ENCODE measurements at regions of chr12 and their contacts with region 1.

Region 1: DNA sequence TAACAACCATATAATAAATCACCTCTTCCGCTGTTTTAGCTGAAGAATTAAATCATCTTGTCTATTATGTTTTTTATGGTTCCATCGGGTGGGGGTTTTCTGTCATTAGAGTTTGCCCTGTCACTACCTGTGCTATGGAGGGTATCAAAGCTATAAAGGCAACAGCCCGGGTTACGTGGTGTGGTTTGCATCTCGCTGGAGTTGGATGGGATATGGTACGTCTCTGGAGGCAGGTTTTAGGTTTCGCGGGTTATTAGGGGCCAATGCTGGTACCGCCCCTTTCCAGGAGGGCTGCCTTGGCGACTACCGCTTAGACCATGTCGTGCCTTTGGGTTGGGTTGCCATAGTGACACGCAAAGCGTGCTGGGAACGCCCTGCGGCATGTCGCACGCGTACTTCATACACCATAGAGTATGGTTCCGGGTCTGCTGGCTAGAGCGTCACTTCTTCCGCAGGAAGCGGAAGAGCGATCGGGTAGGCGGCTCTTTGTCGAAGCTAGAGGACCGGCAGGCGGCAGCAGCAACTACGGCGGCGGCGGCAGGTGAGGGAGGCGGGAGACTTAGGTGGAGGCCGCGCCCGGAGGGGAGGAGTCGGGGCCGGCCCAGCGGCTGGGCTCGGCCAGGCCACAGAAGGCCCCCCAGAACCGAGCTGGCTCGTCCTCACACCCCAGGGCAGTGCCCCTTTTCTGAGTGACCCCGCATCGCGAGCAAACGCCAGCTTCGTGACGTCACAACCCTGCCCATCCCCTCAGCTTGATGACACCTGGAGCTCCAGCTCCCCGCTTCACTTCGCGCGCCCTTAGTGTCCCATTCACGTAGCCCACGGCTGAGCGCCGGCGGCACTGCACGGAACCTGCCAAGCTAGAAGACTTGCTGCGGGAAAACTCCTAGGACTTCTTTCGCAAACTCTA is at the start of gene ZC3H10:
- DNase-seq: peak; percentile 91 to 100 (median 96)
- ATAC-seq: peak; percentile 70
- H3K4me3 ChIP-seq: peak within 1 kb of the TSS; percentile 77 to 86
- H3K4me3 Mint-ChIP-seq: peak within 1 kb of the TSS; percentile 98
- H3K27ac ChIP-seq: peak within 1 kb of the TSS; percentile 87 to 95
- H3K27ac Mint-ChIP-seq: peak within 1 kb of the TSS; percentile 99
- H3K4me1 ChIP-seq: peaks cover 30% of the 10 kb centered on the region
- H3K4me1 Mint-ChIP-seq: peaks cover 38% of the 10 kb centered on the region
- H3K27me3 ChIP-seq: no peaks in the 10 kb centered on the region
- H3K27me3 Mint-ChIP-seq: no peaks in the 10 kb centered on the region
- CTCF ChIP-seq: peak; percentile 33
- total RNA-seq, gene ZC3H10: 9.0 TPM

Region 2: DNA sequence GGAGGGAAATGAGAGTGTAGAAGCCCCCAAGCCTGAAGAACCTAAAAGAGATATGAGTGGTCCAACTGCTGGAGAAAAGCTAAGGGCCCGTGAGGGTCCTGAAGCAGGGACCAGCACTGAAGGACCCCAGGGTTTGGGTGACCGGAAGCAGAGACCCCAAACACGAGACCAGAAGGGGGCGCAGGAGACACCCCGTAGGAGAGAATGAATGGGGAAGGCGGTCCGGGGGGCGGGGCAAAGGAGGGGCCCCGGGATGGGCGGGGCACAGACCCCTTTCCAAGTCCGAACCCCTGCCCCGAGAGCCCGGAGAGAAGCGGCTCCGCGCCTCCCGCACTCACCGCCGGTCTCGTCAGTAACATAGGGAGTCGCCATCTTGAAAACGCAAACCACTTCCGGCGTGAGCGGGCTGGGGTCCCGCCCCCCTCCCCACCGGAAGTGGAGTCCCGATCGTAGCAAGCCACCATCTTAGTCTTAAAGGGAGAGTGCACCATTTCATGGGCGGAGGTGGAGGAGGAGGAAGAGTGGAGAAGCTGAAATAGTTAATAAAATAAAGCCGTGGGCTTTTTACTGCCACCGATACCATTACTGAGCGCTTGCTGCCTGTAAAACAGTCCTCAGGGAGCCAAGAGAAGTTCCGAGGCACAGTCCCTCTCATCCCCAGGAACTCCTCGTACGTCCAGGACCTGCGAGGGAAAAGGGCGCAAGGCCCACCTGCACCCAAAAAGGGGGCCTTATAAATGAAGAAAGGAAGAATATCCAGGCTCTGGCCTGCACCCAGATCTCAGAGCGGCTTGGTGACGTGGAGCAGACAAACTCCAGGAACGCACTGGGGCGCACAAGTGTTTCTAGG is 191.1 kb before region 1 on chr12:
- CTCF ChIA-PET with region 1: no interaction called
- POLR2A ChIA-PET with region 1: no interaction called
- intact Hi-C with region 1: loop called (anchors 1 kb)
- DNase-seq: peak; percentile 75 to 96 (median 88)
- ATAC-seq: peak; percentile 35
- H3K4me3 ChIP-seq: peak overlapping the region; percentile 90 to 98
- H3K4me3 Mint-ChIP-seq: peak overlapping the region; percentile 99
- H3K27ac ChIP-seq: peak overlapping the region; percentile 65 to 80
- H3K27ac Mint-ChIP-seq: peak overlapping the region; percentile 95
- H3K4me1 ChIP-seq: peaks cover 40% of the 10 kb centered on the region
- H3K4me1 Mint-ChIP-seq: peaks cover 51% of the 10 kb centered on the region
- H3K27me3 ChIP-seq: no peaks in the 10 kb centered on the region
- H3K27me3 Mint-ChIP-seq: no peaks in the 10 kb centered on the region
- CTCF ChIP-seq: peak; percentile 70

Region 3: GRCh38 chr12:56007564-56008559 is 110.2 kb before region 1 on chr12:
- CTCF ChIA-PET with region 1: no interaction called
- POLR2A ChIA-PET with region 1: no interaction called
- intact Hi-C with region 1: no loop called
- DNase-seq: peak; percentile 24 to 80 (median 72)
- ATAC-seq: peak; percentile 94
- H3K4me3 ChIP-seq: peak overlapping the region; percentile 53 to 60
- H3K4me3 Mint-ChIP-seq: peak overlapping the region; percentile 80
- H3K27ac ChIP-seq: peak overlapping the region; percentile 35 to 56
- H3K27ac Mint-ChIP-seq: peak overlapping the region; percentile 85
- H3K4me1 ChIP-seq: peaks cover 15% of the 10 kb centered on the region
- H3K4me1 Mint-ChIP-seq: peaks cover 23% of the 10 kb centered on the region
- H3K27me3 ChIP-seq: no peaks in the 10 kb centered on the region
- H3K27me3 Mint-ChIP-seq: no peaks in the 10 kb centered on the region
- CTCF ChIP-seq: no peak

Region 4: GRCh38 chr12:56078990-56079664 is 38.9 kb before region 1 on chr12:
- CTCF ChIA-PET with region 1: interaction called, 7 read pairs
- POLR2A ChIA-PET with region 1: interaction called, 10 read pairs
- intact Hi-C with region 1: loop called (anchors 1 to 5 kb)
- DNase-seq: peak; percentile 10 to 74 (median 52)
- ATAC-seq: peak; percentile 64
- H3K4me3 ChIP-seq: peak overlapping the region; percentile 60 to 72
- H3K4me3 Mint-ChIP-seq: peak overlapping the region; percentile 85
- H3K27ac ChIP-seq: no peak overlapping the region
- H3K27ac Mint-ChIP-seq: no peak overlapping the region
- H3K4me1 ChIP-seq: peaks cover 18% of the 10 kb centered on the region
- H3K4me1 Mint-ChIP-seq: peaks cover 14% of the 10 kb centered on the region
- H3K27me3 ChIP-seq: peaks cover 3 to 12% of the 10 kb centered on the region in 2 experiments
- H3K27me3 Mint-ChIP-seq: peaks cover 2% of the 10 kb centered on the region
- CTCF ChIP-seq: peak; percentile 56

Region 5: GRCh38 chr12:56158029-56158925 is 40.2 kb after region 1 on chr12 and contains the start of gene MYL6:
- CTCF ChIA-PET with region 1: interaction called, 12 read pairs
- POLR2A ChIA-PET with region 1: interaction called, 11 read pairs
- intact Hi-C with region 1: loop called in 1 of 2 experiments (anchors 5 kb)
- DNase-seq: peak; percentile 72 to 98 (median 90)
- ATAC-seq: peak; percentile 79
- H3K4me3 ChIP-seq: peak within 1 kb of the TSS; percentile 70 to 83
- H3K4me3 Mint-ChIP-seq: peak within 1 kb of the TSS; percentile 98
- H3K27ac ChIP-seq: peak within 1 kb of the TSS; percentile 86 to 94
- H3K27ac Mint-ChIP-seq: peak within 1 kb of the TSS; percentile 99
- H3K4me1 ChIP-seq: peaks cover 32% of the 10 kb centered on the region
- H3K4me1 Mint-ChIP-seq: peaks cover 42% of the 10 kb centered on the region
- H3K27me3 ChIP-seq: no peaks in the 10 kb centered on the region
- H3K27me3 Mint-ChIP-seq: no peaks in the 10 kb centered on the region
- CTCF ChIP-seq: no peak
- total RNA-seq, gene MYL6: 580 to 582 TPM

Region 6: DNA sequence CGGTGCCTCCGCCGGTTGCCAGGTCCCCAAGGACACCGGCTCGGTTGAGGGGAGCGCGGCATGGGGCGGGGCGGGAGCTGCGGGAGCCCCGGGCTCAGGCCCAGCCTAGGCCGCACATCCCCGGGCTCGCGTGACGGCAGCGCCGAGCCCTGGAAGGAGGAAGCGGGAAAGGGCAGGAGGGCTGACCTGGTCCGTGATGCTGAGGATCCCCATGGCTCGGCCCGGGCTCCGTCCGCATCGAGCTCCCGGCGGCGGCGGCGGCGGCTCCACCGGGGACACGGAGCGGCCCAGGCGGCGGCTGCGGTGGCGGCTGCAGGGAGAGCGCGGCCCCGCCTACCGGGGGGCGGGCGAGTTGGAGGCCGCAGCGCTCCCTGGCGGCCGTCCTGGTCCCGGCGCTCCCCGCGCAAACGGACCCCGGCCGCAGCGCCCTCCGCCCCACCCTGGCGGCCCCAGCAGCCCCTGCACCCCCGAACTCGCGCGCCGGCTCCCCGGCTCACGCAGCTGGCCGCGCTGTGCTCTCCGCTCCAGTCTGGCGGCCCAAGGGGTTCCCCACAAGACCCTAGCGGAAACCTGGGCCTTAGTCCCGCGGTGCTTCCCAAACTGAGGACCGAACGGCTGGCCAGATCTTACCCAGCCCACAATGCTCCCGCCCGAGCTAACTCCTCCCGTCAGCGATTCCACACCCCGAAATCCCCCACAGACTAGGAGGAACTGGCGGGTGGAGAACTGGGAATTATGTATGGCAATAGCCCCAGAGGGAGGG is 140.2 kb after region 1 on chr12 and contains the start of gene ANKRD52:
- CTCF ChIA-PET with region 1: interaction called, 27 read pairs
- POLR2A ChIA-PET with region 1: interaction called, 11 read pairs
- intact Hi-C with region 1: loop called (anchors 1 kb)
- DNase-seq: peak; percentile 61 to 92 (median 77)
- ATAC-seq: peak; percentile 95
- H3K4me3 ChIP-seq: peak within 1 kb of the TSS; percentile 79 to 99
- H3K4me3 Mint-ChIP-seq: peak within 1 kb of the TSS; percentile 94
- H3K27ac ChIP-seq: peak within 1 kb of the TSS; percentile 77
- H3K27ac Mint-ChIP-seq: peak within 1 kb of the TSS; percentile 88
- H3K4me1 ChIP-seq: peaks cover 21% of the 10 kb centered on the region
- H3K4me1 Mint-ChIP-seq: peaks cover 21% of the 10 kb centered on the region
- H3K27me3 ChIP-seq: no peaks in the 10 kb centered on the region
- H3K27me3 Mint-ChIP-seq: no peaks in the 10 kb centered on the region
- CTCF ChIP-seq: peak; percentile 64
- total RNA-seq, gene ANKRD52: 27.7 to 29.9 TPM

Region 7: GRCh38 chr12:56359851-56360767 is 242.1 kb after region 1 on chr12 and contains the start of gene STAT2:
- CTCF ChIA-PET with region 1: no interaction called
- POLR2A ChIA-PET with region 1: interaction called, 6 read pairs
- intact Hi-C with region 1: loop called in 1 of 2 experiments (anchors 1 kb)
- DNase-seq: peak; percentile 98 to 100 (median 99)
- ATAC-seq: peak; percentile 93
- H3K4me3 ChIP-seq: peak within 1 kb of the TSS; percentile 78 to 81
- H3K4me3 Mint-ChIP-seq: peak within 1 kb of the TSS; percentile 95
- H3K27ac ChIP-seq: peak within 1 kb of the TSS; percentile 76 to 78
- H3K27ac Mint-ChIP-seq: peak within 1 kb of the TSS; percentile 95
- H3K4me1 ChIP-seq: peaks cover 23% of the 10 kb centered on the region
- H3K4me1 Mint-ChIP-seq: peaks cover 34% of the 10 kb centered on the region
- H3K27me3 ChIP-seq: no peaks in the 10 kb centered on the region
- H3K27me3 Mint-ChIP-seq: no peaks in the 10 kb centered on the region
- CTCF ChIP-seq: no peak
- total RNA-seq, gene STAT2: 71.8 to 81.9 TPM

Region 8: GRCh38 chr12:56724972-56725722 is 607.1 kb after region 1 on chr12 and contains the start of gene NACA:
- CTCF ChIA-PET with region 1: no interaction called
- POLR2A ChIA-PET with region 1: no interaction called
- intact Hi-C with region 1: loop called in 1 of 2 experiments (anchors 5 kb)
- DNase-seq: peak; percentile 94 to 99 (median 97)
- ATAC-seq: peak; percentile 95
- H3K4me3 ChIP-seq: peak within 1 kb of the TSS; percentile 70 to 88
- H3K4me3 Mint-ChIP-seq: peak within 1 kb of the TSS; percentile 99
- H3K27ac ChIP-seq: peak within 1 kb of the TSS; percentile 75 to 80
- H3K27ac Mint-ChIP-seq: peak within 1 kb of the TSS; percentile 96
- H3K4me1 ChIP-seq: peaks cover 45% of the 10 kb centered on the region
- H3K4me1 Mint-ChIP-seq: peaks cover 52% of the 10 kb centered on the region
- H3K27me3 ChIP-seq: no peaks in the 10 kb centered on the region
- H3K27me3 Mint-ChIP-seq: no peaks in the 10 kb centered on the region
- CTCF ChIP-seq: no peak
- total RNA-seq, gene NACA: 1,373 to 1,407 TPM